Gastrocnemius medialis (tissue), 4 donors: ENCODE measurements at regions of chr12 and their contacts with region 1.

Region 1: GRCh38 chr12:14239350-14239934 is 126.0 kb upstream of the ATF7IP start:
- DNase-seq: peak in 1 of 2 donors; percentile 29
- ATAC-seq: peak; percentile 36 to 69
- H3K4me3 ChIP-seq: peak overlapping the region in 3 of 4 donors; percentile 7 to 39 (median 17)
- H3K27ac ChIP-seq: no peak overlapping the region
- H3K4me1 ChIP-seq: no peaks in the 10 kb centered on the region
- H3K27me3 ChIP-seq: no peaks in the 10 kb centered on the region
- CTCF ChIP-seq: no peak
- POLR2A ChIP-seq: no peak

Region 2: GRCh38 chr12:14365294-14366208 is 126.1 kb after region 1 on chr12 and contains the start of gene ATF7IP:
- in situ Hi-C with region 1: no loop called
- intact Hi-C with region 1: loop called (anchors 5 kb)
- DNase-seq: peak; percentile 90 to 96
- ATAC-seq: peak; percentile 95 to 96
- H3K4me3 ChIP-seq: peak within 1 kb of the TSS; percentile 71 to 89 (median 86)
- H3K27ac ChIP-seq: peak within 1 kb of the TSS; percentile 94 to 96 (median 95)
- H3K4me1 ChIP-seq: peaks cover 0 to 12% of the 10 kb centered on the region in 2 donors
- H3K27me3 ChIP-seq: no peaks in the 10 kb centered on the region
- CTCF ChIP-seq: peak in 2 of 5 experiments; percentile 30 to 40
- POLR2A ChIP-seq: peak; percentile 66 to 86
- total RNA-seq, gene ATF7IP: 15.9 to 42.2 (median 30.7) TPM

Region 3: GRCh38 chr12:14618983-14619382 is 379.5 kb after region 1 on chr12:
- in situ Hi-C with region 1: no loop called
- intact Hi-C with region 1: loop called (anchors 10 kb)
- DNase-seq: no peak
- ATAC-seq: no peak
- H3K4me3 ChIP-seq: no peak overlapping the region
- H3K27ac ChIP-seq: no peak overlapping the region
- H3K4me1 ChIP-seq: peaks cover 0 to 7% of the 10 kb centered on the region in 2 donors
- H3K27me3 ChIP-seq: no peaks in the 10 kb centered on the region
- CTCF ChIP-seq: peak in 2 of 5 experiments; percentile 13 to 33
- POLR2A ChIP-seq: no peak

Region 4: DNA sequence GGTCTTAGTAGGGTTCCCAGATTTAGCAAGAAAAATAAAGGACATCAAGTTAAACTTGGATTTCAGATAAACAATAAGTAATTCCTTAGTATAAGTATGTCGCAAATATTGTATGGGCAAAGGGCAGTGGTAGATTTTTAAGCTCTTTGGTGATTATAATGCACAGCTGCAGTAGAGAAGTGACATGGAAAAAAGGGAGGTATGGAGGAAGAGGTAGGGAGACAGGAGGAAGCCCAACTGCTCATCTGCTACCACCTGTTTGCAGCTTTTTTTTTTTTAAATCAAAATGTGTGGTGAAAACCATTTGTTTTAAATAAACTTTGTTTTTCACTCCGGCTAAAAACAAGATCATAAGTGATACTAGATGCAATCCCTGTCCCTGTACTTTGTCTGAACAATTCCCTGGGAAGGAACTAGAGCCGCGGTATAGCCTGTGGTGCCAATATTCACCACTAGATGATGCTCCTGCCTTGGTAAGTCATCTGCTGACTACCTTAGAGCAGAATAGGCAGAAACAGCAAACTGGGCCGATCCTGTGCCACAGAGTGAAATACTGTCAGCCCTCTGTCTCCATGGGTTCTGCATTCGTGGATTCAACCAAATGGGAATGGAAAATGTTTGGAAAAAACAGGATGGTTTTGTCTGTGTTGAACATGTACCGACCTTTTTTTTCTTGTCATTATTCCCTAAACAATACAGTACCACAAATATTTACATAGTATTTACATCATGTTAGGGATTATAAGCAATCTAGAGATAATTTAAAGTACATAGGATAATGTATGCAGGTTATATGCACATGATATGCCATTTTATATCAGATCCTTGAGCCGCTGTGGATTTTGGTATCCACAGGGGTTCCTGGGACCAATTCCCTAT is 390.6 kb after region 1 on chr12:
- in situ Hi-C with region 1: loop called in 1 of 4 experiments (anchors 25 kb)
- intact Hi-C with region 1: no loop called
- DNase-seq: peak; percentile 42 to 46
- ATAC-seq: peak; percentile 93 to 97
- H3K4me3 ChIP-seq: no peak overlapping the region
- H3K27ac ChIP-seq: no peak overlapping the region
- H3K4me1 ChIP-seq: peaks cover 0 to 3% of the 10 kb centered on the region in 2 donors
- H3K27me3 ChIP-seq: no peaks in the 10 kb centered on the region
- CTCF ChIP-seq: peak; percentile 81 to 95 (median 87)
- POLR2A ChIP-seq: no peak

Region 5: DNA sequence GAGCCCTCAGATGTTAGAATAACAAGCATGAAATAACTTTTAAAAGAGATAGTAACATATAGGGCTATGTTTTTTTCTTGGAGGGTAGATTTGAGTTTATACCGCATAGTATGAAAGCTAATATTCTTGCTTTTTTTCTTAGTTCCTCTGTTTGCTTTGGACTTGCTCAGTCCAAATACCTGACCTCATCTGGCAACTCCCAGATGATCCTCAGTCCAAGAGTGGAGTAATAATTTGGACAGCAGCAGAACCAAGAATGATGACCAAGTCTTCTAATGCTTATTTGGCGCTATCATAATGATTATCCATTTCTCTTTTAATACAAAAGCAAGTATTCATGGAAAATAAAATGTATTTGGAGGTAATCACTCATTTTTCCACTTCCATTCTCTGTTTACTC is 411.3 kb after region 1 on chr12:
- in situ Hi-C with region 1: loop called in 3 of 4 experiments (anchors 10 to 25 kb)
- intact Hi-C with region 1: no loop called
- DNase-seq: no peak
- ATAC-seq: peak; percentile 60 to 61
- H3K4me3 ChIP-seq: peak overlapping the region in 1 of 4 donors; percentile 9
- H3K27ac ChIP-seq: peak overlapping the region in 1 of 4 donors; percentile 8
- H3K4me1 ChIP-seq: peaks cover 0 to 3% of the 10 kb centered on the region in 2 donors
- H3K27me3 ChIP-seq: no peaks in the 10 kb centered on the region
- CTCF ChIP-seq: no peak
- POLR2A ChIP-seq: no peak

Region 6: GRCh38 chr12:14664510-14664909 is 425.1 kb after region 1 on chr12:
- in situ Hi-C with region 1: loop called in 2 of 4 experiments (anchors 10 to 25 kb)
- intact Hi-C with region 1: loop called (anchors 2 kb)
- DNase-seq: no peak
- ATAC-seq: no peak
- H3K4me3 ChIP-seq: no peak overlapping the region
- H3K27ac ChIP-seq: no peak overlapping the region
- H3K4me1 ChIP-seq: no peaks in the 10 kb centered on the region
- H3K27me3 ChIP-seq: no peaks in the 10 kb centered on the region
- CTCF ChIP-seq: peak; percentile 35 to 63 (median 54)
- POLR2A ChIP-seq: no peak